SK-N-SH (cell line): ENCODE measurements at regions of chr1 and their contacts with region 1.

Region 1: GRCh38 chr1:27556781-27557595 is 47.0 kb downstream of the AHDC1 start:
- DNase-seq: peak; percentile 94
- H3K4me3 ChIP-seq: no peak overlapping the region
- H3K27ac ChIP-seq: peak overlapping the region; percentile 18 to 23; a peak in 3 of 4 replicates
- H3K4me1 ChIP-seq: peaks cover 29 to 36% of the 10 kb centered on the region in 2 experiments; a peak in 3 of 4 replicates
- H3K27me3 ChIP-seq: no peaks in the 10 kb centered on the region
- CTCF ChIP-seq: peak; percentile 78
- EP300 ChIP-seq: no peak
- RAD21 ChIP-seq: peak; percentile 87

Region 2: GRCh38 chr1:27176323-27176722 is 380.7 kb before region 1 on chr1:
- CTCF ChIA-PET with region 1: no interaction called
- POLR2A ChIA-PET with region 1: no interaction called
- DNase-seq: no peak
- H3K4me3 ChIP-seq: no peak overlapping the region
- H3K27ac ChIP-seq: no peak overlapping the region
- H3K4me1 ChIP-seq: no peaks in the 10 kb centered on the region
- H3K27me3 ChIP-seq: no peaks in the 10 kb centered on the region
- CTCF ChIP-seq: no peak
- EP300 ChIP-seq: no peak
- RAD21 ChIP-seq: no peak

Region 3: DNA sequence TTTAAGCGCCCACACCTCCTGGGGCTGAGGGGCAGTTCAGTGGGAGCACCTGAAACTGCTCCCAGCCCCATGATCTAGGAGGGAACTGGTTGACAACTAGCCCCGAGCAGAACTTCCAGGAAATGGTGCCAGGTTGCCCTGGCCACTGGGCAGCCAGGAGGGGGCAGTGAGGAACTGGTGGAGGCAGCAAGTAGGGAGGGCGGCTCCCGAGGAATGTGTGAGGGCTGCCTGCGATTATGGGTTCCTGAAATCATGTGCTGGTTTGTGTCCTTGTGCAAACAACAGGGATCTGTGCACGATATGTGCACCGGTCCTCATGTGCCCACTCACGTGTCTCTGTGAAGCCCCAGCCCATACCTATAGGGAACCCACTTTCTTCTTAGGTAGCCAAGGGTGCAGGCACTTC is 154.6 kb before region 1 on chr1:
- CTCF ChIA-PET with region 1: interaction called, 13 read pairs
- POLR2A ChIA-PET with region 1: no interaction called
- DNase-seq: peak; percentile 54
- H3K4me3 ChIP-seq: no peak overlapping the region
- H3K27ac ChIP-seq: no peak overlapping the region
- H3K4me1 ChIP-seq: peaks cover 0 to 4% of the 10 kb centered on the region in 2 experiments; a peak in 1 of 4 replicates
- H3K27me3 ChIP-seq: no peaks in the 10 kb centered on the region
- CTCF ChIP-seq: peak; percentile 47
- EP300 ChIP-seq: no peak
- RAD21 ChIP-seq: peak; percentile 40

Region 4: GRCh38 chr1:27448982-27449381 is 108.0 kb before region 1 on chr1:
- CTCF ChIA-PET with region 1: interaction called, 11 read pairs
- POLR2A ChIA-PET with region 1: no interaction called
- DNase-seq: no peak
- H3K4me3 ChIP-seq: no peak overlapping the region
- H3K27ac ChIP-seq: no peak overlapping the region
- H3K4me1 ChIP-seq: no peaks in the 10 kb centered on the region; a peak in 1 of 4 replicates
- H3K27me3 ChIP-seq: no peaks in the 10 kb centered on the region
- CTCF ChIP-seq: no peak
- EP300 ChIP-seq: no peak
- RAD21 ChIP-seq: no peak

Region 5: DNA sequence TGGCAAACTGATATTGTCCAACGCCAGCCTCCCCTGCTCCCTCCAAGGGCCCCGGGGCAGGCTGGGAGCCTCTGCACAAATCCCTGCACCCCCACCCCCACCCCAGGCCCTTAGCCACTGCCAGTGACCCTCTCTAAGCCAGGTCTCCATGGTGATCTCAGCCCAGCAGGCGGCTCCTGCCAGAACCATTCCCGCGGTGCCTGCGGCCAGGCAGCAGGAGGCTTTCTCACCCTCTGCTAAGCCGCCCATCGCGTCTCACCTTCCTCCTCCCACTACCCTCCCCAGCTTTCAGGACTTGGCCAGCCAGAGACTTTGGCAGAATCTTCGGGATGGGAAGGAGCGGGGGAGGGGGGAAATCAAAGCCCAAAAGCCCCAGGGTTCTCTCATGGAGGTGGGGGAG is 20.2 kb before region 1 on chr1:
- CTCF ChIA-PET with region 1: interaction called, 176 read pairs
- POLR2A ChIA-PET with region 1: no interaction called
- DNase-seq: peak; percentile 93
- H3K4me3 ChIP-seq: peak overlapping the region in 1 of 2 experiments; percentile 20; a peak in 1 of 4 replicates
- H3K27ac ChIP-seq: peak overlapping the region; percentile 91 to 93
- H3K4me1 ChIP-seq: peaks cover 40 to 57% of the 10 kb centered on the region in 2 experiments
- H3K27me3 ChIP-seq: no peaks in the 10 kb centered on the region
- CTCF ChIP-seq: no peak
- EP300 ChIP-seq: 0 out of 4 replicates have a peak, but pooled peaks of 1 of the 2 experiments have one; percentile 14
- RAD21 ChIP-seq: no peak

Region 6: DNA sequence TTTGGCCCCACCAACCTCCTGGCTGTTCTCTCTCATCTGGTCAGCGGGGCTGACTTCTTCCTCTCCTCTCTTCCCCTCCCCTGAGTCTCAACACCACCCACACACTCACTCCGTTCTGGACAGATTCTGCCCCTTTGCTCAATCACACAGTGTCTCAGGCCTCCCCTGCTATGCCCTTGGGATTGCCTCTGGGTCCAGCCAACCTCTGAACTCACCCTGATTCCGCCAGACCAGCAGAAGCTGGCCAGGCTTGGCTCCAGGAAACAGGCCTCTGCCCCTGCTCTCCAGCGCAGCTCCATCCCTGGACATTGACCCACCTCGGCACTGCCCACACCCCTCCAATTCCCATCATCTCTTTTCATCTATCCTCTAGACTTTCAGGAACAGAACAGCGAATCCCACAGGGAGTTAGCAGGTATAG is 24.8 kb after region 1 on chr1:
- CTCF ChIA-PET with region 1: interaction called, 131 read pairs
- POLR2A ChIA-PET with region 1: no interaction called
- DNase-seq: no peak
- H3K4me3 ChIP-seq: no peak overlapping the region
- H3K27ac ChIP-seq: no peak overlapping the region
- H3K4me1 ChIP-seq: peaks cover 1 to 11% of the 10 kb centered on the region in 2 experiments; a peak in 2 of 4 replicates
- H3K27me3 ChIP-seq: no peaks in the 10 kb centered on the region
- CTCF ChIP-seq: no peak
- EP300 ChIP-seq: no peak
- RAD21 ChIP-seq: no peak

Region 7: DNA sequence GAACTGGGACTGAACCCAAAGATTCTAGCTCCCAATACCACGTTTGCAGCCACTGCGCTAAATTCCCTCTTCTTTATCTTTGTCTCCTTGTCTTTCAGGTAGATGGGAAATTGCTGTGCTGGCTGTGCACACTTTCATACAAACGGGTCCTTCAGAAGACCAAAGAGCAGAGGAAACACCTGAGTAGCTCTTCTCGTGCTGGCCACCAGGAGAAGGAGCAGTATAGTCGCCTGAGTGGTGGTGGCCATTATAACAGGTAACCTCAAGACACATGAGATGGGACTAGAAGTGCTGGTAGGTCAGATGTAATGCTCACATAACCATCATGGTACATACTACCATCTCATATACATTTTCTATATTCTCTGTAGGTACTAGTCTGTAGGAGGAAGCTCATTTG is 187.6 kb after region 1 on chr1:
- CTCF ChIA-PET with region 1: no interaction called
- POLR2A ChIA-PET with region 1: no interaction called
- DNase-seq: no peak
- H3K4me3 ChIP-seq: no peak overlapping the region
- H3K27ac ChIP-seq: no peak overlapping the region
- H3K4me1 ChIP-seq: no peaks in the 10 kb centered on the region
- H3K27me3 ChIP-seq: no peaks in the 10 kb centered on the region
- CTCF ChIP-seq: no peak
- EP300 ChIP-seq: no peak
- RAD21 ChIP-seq: no peak